ENCODE measurements at regions of chr2 and their contacts with region 1.

Region 1: DNA sequence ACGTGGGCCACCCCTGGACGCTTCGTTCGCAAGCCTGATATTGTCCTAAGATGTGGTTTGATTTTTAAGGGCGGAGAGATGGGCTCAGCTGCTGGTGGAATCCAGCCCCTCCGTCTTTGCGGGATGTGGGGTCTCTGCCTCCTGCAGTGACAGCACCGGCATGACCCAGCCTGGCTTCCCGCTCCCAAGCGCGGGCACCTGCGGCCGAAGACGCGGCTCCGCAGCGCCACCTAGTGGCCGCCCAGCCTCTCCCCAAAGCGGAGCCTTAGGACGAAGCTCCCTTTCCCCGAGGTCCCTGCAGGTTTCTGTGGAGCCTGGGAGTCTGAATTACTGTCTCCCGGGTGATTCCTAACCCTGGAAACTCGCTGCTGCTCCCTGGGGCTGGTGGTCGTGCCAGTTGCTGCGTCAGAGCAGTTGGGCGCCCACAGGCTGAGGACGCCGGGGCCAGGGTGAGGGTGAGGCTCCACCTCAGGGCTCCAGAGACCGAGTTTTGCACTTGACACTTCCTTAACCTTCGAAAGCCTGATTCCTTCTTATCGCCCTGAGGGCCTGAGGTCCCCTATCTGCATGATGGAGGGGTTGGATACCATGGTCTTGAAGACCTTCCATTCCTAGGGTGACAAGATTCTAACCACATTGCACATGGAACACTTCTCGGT is 137.5 kb downstream of the TPO start:
- DNase-seq: peak in 1 of 2 experiments; percentile 53
- H3K4me3 ChIP-seq: no peak overlapping the region
- H3K27ac ChIP-seq: no peak overlapping the region
- H3K4me1 ChIP-seq: peaks cover 27% of the 10 kb centered on the region
- H3K27me3 ChIP-seq: peaks cover 7% of the 10 kb centered on the region; the same call in 1 of the 2 replicates
- CTCF ChIP-seq: peak; percentile 95

Region 2: DNA sequence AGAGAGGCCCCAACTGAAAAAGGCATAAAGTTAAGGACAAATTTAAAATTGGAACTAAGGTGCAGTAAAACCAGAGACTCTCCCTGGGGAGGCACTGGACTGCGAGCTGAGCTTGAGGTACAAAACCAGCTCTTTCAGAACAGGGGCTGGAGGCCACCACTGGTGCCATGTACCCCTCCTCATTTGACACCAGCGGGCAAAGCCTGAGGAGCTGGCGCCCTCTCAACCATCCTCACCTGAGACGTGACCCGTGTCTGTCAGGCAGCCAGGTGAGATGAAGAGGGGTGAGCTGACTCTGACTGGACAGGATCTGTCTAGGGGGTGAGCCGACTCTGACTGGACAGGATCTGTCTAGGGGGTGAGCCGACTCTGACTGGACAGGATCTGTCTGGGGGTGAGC is 942.1 kb before region 1 on chr2:
- CTCF ChIA-PET with region 1: interaction called, 17 read pairs
- POLR2A ChIA-PET with region 1: no interaction called
- intact Hi-C with region 1: no loop called
- DNase-seq: no peak
- H3K4me3 ChIP-seq: no peak overlapping the region
- H3K27ac ChIP-seq: no peak overlapping the region
- H3K4me1 ChIP-seq: peaks cover 4% of the 10 kb centered on the region
- H3K27me3 ChIP-seq: no peaks in the 10 kb centered on the region
- CTCF ChIP-seq: no peak

Region 3: DNA sequence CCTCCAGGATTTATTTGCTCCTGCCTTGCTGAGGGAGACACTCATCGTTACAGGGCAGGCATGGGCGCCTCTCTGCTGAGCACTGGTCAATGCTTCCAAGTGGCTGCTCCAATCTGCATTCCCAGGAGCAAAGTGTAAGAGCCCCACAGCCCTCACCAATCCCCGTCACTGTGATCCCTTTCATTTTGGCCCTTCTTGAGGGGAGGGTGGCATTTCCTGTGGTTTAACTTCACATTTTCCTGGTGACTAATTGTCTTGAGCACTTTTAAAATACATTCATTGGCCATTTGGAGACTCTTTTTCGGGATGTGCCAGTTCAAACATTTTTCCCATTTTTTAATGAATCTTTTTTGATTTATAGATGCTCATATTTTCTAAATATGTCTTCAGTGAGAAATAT is 104.5 kb before region 1 on chr2:
- CTCF ChIA-PET with region 1: no interaction called
- POLR2A ChIA-PET with region 1: no interaction called
- intact Hi-C with region 1: no loop called
- DNase-seq: no peak
- H3K4me3 ChIP-seq: no peak overlapping the region
- H3K27ac ChIP-seq: no peak overlapping the region
- H3K4me1 ChIP-seq: no peaks in the 10 kb centered on the region
- H3K27me3 ChIP-seq: peaks cover 74% of the 10 kb centered on the region
- CTCF ChIP-seq: no peak

Region 4: DNA sequence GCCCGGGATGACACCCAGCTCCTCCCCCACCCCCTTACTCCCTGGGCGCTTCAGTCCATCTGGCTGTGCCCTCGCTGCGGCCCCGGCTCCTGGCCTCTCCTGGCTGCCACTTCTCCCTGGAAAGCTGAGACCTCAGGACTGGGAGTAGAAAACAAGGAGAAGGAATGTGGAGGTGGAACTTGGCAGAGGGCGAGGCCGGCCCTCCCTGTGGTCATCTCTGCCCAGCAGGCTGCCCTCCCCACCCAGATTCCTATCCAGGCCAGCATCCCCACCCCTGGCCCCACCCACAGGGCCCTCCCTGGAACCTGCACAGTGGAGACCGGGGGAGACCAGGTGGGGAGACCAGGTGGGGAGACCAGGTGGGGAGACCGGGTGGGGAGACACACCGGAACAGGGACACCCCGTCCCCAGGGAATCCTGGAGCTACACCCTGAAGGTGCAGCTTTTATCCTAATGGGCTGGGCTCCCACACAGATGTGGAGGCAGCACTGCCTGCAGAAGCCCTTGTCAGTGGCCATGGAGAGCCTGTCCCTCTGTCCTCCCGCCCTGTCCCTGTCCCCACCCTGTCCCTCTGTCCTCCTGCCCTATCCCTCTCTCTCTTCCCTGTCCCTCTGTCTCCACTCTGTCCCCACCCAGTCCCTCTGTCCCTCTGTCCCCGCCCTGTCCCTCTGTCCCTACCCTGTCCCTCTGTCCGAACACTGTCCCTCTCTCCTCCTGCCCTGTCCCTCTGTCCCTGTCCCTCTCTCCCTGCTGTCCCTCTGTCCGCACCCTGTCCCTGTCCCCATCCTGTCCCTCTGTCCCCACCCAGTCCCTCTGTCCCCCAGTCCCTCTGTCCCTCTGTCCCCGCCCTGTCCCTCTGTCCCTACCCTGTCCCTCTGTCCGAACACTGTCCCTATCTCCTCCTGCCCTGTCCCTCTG is 36.4 kb after region 1 on chr2:
- CTCF ChIA-PET with region 1: interaction called, 5 read pairs
- POLR2A ChIA-PET with region 1: no interaction called
- intact Hi-C with region 1: loop called (anchors 1 kb)
- DNase-seq: peak; percentile 77 to 84
- H3K4me3 ChIP-seq: peak overlapping the region; percentile 54; the same call in 1 of the 2 replicates
- H3K27ac ChIP-seq: peak overlapping the region; percentile 78
- H3K4me1 ChIP-seq: peaks cover 23% of the 10 kb centered on the region
- H3K27me3 ChIP-seq: peaks cover 18% of the 10 kb centered on the region
- CTCF ChIP-seq: no peak

Region 5: DNA sequence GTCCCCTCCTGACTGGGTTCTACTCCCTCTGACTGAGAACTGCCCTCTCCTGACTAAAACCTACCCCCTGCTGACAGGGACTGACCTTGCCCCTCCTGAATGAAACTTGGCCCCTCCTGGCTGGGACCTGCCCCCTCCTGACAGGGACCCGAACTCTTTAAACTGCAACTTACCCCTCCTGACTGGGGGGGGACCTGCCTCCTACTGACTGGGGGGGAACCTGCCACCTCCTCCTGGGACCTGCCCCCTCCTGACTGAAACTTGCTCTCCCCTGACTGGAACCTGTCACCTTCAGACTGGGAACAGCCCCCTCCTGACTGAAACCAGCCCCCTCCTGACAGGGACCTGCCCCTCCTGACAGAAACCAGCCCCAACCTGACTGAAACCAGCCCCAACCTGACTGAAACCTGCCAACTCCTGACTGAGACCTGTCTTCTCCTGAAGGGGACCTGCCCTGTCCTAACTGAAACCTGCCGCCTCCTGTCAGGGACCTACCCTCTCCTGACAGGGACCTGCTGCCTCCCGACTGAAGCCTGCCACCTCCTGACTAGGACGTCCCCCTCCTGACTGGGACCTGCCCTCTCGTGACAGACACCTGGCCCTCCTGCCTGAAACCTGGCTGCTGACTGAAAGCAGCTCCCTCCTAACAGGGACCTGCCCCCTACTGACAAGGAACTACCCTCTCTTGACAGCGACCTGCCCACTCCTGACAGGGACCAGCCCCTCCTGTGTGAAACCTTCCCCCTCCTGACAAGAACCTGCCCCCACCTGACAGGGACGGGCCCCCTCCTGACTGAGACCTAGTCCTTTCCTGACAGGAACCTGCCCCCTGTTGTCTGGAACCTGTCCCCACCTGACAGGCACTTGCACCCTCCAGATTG is 106.4 kb after region 1 on chr2:
- CTCF ChIA-PET with region 1: no interaction called
- POLR2A ChIA-PET with region 1: no interaction called
- intact Hi-C with region 1: loop called (anchors 5 kb)
- DNase-seq: no peak
- H3K4me3 ChIP-seq: no peak overlapping the region
- H3K27ac ChIP-seq: 0 out of 2 replicates have a peak overlapping the region, but pooled peaks have one; percentile 16
- H3K4me1 ChIP-seq: no peaks in the 10 kb centered on the region
- H3K27me3 ChIP-seq: peaks cover 18% of the 10 kb centered on the region
- CTCF ChIP-seq: no peak

Region 6: DNA sequence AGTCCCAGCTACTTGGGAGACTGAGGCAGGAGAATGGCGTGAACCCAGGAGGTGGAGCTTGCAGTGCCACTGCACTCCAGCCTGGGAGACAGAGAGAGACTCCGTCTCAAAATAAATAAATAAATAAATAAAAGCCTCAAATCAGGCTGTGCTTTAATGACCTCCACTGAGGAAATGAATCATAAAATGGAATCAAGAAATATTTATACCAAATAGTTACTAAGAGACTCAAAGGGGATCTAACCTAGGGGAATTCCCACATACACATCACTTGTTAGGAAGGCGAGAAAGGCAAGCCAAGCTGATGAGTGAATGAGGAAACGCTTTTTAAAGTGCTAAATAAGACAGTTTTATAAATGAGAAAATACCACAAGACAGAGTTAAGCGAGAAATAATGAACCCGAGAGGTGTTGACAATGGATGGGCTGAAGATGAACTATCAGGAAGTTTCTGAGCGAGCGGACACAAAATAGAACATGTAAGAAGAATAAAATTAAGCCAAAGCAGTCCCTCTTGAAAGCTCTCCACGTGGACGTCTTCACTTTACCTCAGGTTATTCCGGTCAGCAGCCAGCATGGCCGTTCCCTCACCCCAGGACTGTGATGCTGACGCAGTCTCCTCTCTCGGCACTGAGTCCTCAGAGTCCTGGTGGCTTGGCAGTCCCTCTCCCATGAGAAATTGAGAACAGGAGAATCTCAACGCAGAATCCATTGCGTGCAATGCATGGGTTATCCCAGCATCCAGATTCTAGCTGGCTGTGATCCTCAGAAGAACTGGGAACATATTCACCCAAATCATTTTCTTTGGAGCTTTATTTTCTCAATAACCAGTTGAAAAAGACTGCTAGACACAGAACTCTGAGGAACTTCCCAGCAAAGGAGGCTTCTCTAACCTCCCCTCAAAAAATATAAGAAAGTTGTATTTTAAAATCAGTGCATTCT is 171.2 kb after region 1 on chr2:
- CTCF ChIA-PET with region 1: no interaction called
- POLR2A ChIA-PET with region 1: no interaction called
- intact Hi-C with region 1: loop called (anchors 1 kb)
- DNase-seq: peak; percentile 31 to 92
- H3K4me3 ChIP-seq: peak overlapping the region; percentile 29; the same call in 1 of the 2 replicates
- H3K27ac ChIP-seq: peak overlapping the region; percentile 95
- H3K4me1 ChIP-seq: peaks cover 39% of the 10 kb centered on the region
- H3K27me3 ChIP-seq: peaks cover 10% of the 10 kb centered on the region
- CTCF ChIP-seq: no peak

Measured in PC-9 (cell line).